ENCODE measurements at regions of chr2 and their contacts with region 1.

Region 1: DNA sequence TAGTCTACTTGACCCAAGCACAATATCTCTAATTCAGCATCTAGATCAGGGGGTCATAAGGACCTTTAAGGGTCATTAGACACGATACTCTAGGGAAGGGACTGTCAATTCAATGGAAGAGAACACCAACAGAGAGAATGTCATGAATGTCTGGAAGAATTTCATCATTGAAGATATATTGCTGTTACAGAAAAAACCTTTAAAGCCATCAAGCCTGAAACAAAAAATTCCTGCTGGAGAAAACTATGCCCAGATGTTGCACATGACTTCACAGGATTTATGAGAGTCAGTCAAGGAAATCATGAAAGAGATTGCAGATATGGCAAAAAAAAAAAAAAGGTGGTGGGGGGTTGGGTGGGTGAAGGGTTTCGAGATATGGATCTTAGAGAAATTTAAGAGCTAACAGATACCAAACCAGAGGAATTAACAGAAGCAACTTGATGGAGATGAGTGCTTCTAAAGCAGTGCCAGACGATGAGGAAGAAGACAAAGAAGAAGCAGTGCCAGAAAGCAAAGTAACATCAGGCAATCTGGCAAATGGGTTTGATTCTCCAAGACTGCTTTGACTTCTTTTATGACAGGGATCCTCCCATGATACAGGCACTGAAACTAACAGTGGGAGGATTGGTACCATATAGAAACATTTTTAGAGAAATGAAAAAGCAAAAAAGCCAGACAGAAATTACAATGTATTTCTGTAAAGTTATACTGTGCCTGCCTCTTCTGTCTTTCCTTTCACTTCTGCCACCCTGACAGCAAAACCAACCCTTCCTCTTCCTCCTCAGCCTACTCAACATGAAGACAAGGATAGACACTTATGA is 28.6 kb downstream of the MAP4K3 start:
- DNase-seq: no peak
- H3K4me3 Mint-ChIP-seq: no peak overlapping the region
- H3K27ac Mint-ChIP-seq: no peak overlapping the region
- H3K4me1 Mint-ChIP-seq: peaks cover 69% of the 10 kb centered on the region
- H3K27me3 Mint-ChIP-seq: no peaks in the 10 kb centered on the region

Region 2: DNA sequence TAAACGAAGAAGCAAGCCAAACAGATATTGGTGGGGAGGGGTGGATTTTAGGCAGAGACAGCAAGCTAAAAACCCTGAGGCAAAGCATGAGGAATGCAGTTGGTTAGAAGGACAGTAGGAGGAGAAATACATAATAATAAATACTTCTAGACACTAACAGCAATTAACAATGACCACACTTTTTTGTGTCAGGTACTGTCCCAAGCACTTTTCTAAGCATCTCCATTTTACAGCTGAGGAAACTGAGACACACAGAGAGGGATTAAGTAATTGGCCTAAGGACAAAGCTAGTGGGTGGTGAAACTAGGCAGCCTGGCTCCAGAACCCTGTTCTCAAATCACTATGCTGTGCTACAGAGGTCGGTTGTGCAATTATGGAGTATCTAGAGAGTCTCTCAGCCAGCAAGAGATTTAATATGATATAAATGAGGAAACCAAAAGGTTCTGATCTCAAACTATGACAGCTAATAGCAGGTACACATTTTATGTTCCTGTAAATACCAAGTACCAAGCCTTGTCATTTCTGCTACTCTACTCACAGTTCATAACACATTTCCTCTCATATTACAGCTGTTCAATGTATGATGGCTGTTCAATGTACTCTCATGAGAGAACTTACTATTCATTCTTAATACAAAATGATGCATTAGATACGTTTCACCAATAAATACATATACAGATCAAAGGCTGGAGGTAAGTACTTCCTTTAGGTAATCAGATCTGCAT is 23.2 kb after region 1 on chr2:
- CTCF ChIA-PET with region 1: interaction called, 3 read pairs
- POLR2A ChIA-PET with region 1: no interaction called
- intact Hi-C with region 1: loop called (anchors 2 kb)
- DNase-seq: no peak
- H3K4me3 Mint-ChIP-seq: no peak overlapping the region
- H3K27ac Mint-ChIP-seq: no peak overlapping the region
- H3K4me1 Mint-ChIP-seq: peaks cover 70% of the 10 kb centered on the region
- H3K27me3 Mint-ChIP-seq: no peaks in the 10 kb centered on the region

Region 3: GRCh38 chr2:39498786-39499185 is 90.3 kb after region 1 on chr2:
- CTCF ChIA-PET with region 1: no interaction called
- POLR2A ChIA-PET with region 1: no interaction called
- intact Hi-C with region 1: no loop called
- DNase-seq: no peak
- H3K4me3 Mint-ChIP-seq: no peak overlapping the region
- H3K27ac Mint-ChIP-seq: no peak overlapping the region
- H3K4me1 Mint-ChIP-seq: peaks cover 26% of the 10 kb centered on the region
- H3K27me3 Mint-ChIP-seq: peaks cover 13% of the 10 kb centered on the region